WTC11 (cell line): ENCODE measurements at regions of chr12 and their contacts with region 1.

Region 1: DNA sequence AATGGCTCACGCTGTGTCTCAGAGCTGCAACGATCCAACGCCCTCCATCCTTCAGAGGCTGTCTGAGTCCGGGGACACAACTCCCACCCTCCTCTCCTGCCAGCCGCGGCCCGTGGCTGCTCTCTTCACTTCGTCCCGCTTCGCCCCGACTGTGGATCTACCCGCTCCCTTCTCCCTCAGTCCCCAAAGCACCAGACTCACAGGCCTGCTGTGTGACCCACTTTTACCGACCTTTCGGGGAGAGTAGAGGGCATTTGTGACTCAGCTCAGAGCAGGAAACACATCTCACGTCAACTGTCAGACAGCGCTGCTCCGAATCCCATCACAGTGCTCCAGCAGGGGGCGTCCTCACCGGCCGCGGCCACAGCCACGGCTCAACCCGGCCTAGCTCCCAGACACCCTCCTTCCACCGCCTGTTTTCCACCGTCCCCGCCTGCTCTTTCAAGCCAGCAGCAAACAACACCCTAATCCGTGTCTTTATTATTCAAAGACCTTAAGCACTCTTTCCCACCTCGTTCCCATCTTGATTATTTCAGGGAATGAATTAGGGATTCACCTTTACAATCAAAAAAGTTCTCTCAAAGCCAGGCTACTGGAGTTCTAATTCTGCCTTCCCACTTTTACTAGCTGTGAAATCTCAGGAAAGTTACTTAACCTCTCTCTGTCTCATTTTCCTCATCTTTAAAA is 5.0 kb upstream of the AQP2 start:
- DNase-seq: peak; percentile 90
- ATAC-seq: peak; percentile 95
- H3K4me3 Mint-ChIP-seq: peak overlapping the region; percentile 61
- H3K27ac Mint-ChIP-seq: 0 out of 2 replicates have a peak overlapping the region, but pooled peaks have one; percentile 18
- H3K4me1 Mint-ChIP-seq: peaks cover 40% of the 10 kb centered on the region
- H3K27me3 Mint-ChIP-seq: peaks cover 9% of the 10 kb centered on the region; the same call in 1 of the 2 replicates
- CTCF ChIP-seq: peak; percentile 69

Region 2: DNA sequence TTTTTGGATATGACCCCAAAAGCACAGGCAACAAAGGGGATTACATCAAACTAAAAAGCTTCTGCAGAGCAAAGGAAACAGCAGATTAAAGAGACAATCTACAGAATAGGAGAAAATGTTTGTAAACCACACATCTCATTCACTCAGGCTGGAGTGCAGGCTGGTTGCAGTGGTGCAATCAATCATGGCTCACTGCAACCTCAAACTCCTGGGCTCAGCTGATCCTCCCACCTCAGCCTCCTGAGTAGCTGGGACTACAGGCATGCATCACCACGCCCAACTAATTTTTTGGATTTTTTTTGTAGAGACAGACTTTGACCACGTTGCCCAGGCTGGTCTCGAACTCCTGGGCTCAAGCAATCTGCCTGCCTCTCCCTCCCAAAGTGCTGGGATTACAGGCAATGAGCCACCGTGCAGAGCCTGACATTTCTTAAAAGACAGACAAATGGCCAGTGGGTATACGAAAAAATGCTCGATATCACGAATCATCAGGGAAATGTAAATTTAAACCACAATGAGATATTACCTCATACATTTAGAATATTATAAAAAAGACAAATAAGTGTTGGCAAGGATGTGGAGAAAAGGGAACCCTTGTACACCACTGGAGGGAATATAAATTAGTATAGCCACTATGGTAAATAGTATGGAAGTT is 127.2 kb before region 1 on chr12:
- CTCF ChIA-PET with region 1: no interaction called
- POLR2A ChIA-PET with region 1: no interaction called
- DNase-seq: no peak
- ATAC-seq: no peak
- H3K4me3 Mint-ChIP-seq: no peak overlapping the region
- H3K27ac Mint-ChIP-seq: no peak overlapping the region
- H3K4me1 Mint-ChIP-seq: peaks cover 17% of the 10 kb centered on the region
- H3K27me3 Mint-ChIP-seq: no peaks in the 10 kb centered on the region
- CTCF ChIP-seq: no peak

Region 3: DNA sequence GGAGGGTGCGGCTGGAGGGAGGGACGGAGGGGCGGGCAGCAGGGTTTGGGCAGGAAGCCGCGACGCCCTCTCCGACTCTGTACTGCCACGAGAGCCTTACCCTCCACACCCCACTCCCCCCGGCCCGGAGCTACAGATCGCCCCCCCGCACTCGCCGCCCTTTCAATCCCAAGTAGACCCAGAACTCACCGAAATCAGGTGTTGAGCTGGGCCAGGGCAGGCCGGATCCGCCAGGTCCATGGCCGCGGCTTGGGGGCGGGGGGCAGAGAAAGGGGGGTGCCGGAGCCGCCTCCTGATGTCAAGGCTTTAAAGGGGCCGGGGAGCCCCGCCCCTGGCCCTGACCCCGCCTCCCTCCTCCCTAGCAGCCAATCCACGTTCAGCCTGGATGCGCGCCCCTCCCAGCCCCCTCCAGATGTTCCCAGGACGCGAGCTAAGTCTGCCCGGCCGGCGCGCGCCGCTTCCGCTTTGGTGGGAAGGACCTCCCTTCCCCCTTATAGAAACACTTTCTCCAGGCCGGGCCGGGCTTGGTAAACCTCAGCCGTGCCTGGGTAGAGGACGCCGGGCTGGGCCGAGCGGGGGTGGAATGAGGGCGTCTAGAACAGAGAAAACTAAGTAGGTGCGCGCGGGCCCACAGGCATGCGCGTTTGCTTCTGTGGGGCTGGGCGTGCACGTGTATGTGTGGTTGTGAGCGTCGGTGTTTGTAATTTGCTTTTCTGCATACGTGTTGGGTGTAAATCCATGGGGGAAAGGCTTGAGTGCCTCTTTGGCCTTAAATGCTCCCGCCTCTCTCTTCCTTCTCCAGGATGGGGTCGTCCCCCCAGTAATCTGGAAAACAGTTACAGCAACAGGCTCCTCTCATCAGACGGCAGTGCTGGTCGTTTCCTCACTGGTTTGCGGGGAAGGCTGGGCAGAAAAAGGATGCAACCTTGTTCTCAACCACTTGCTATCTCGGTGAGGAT is 117.1 kb before region 1 on chr12 and contains the start of gene NCKAP5L:
- CTCF ChIA-PET with region 1: interaction called, 11 read pairs
- POLR2A ChIA-PET with region 1: interaction called, 4 read pairs
- DNase-seq: peak; percentile 97
- ATAC-seq: peak; percentile 89
- H3K4me3 Mint-ChIP-seq: peak within 1 kb of the TSS; percentile 93
- H3K27ac Mint-ChIP-seq: peak within 1 kb of the TSS; percentile 100
- H3K4me1 Mint-ChIP-seq: peaks cover 33% of the 10 kb centered on the region
- H3K27me3 Mint-ChIP-seq: no peaks in the 10 kb centered on the region; the same call in 1 of the 2 replicates
- CTCF ChIP-seq: no peak
- total RNA-seq, gene NCKAP5L: 22.1 to 27.8 TPM (median 22.4 TPM) in 3 replicates

Region 4: DNA sequence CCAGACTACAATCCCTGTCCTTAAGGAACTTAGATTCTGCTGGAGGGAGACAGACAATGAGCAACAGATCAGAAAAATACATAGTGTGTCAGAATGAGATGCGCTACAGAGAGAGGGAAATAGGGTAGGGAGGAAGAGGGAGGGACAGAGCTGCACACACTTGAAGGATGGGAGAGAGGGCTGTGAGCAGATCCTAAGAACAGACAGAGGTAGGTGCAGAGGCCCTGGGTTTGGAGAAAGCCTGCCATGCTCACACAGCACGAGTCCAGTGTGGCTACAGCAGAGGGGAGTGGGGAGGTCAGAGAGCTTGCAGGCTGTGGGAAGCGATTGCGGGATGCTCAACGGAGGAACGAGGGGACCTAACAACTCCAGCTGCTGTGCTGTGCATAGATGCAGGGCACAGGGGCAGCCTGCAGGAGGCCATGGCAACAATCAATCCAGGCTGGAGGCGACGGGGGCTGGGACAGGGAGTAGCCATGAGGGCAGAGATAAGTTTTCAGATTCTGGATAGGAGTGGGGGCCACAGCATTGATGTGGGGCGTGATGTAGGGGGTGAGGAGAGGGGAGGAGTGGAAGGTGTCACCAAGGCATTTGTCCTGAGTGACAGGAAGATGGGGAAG is 62.6 kb before region 1 on chr12:
- CTCF ChIA-PET with region 1: interaction called, 29 read pairs
- POLR2A ChIA-PET with region 1: no interaction called
- DNase-seq: peak; percentile 46
- ATAC-seq: peak; percentile 70
- H3K4me3 Mint-ChIP-seq: no peak overlapping the region
- H3K27ac Mint-ChIP-seq: no peak overlapping the region
- H3K4me1 Mint-ChIP-seq: peaks cover 43% of the 10 kb centered on the region
- H3K27me3 Mint-ChIP-seq: no peaks in the 10 kb centered on the region
- CTCF ChIP-seq: no peak

Region 5: GRCh38 chr12:49903695-49904423 is 41.7 kb before region 1 on chr12 and contains the start of gene FAIM2:
- CTCF ChIA-PET with region 1: interaction called, 26 read pairs
- POLR2A ChIA-PET with region 1: no interaction called
- DNase-seq: peak; percentile 54
- ATAC-seq: peak; percentile 38
- H3K4me3 Mint-ChIP-seq: peak within 1 kb of the TSS; percentile 66
- H3K27ac Mint-ChIP-seq: no peak within 1 kb of the TSS
- H3K4me1 Mint-ChIP-seq: peaks cover 8% of the 10 kb centered on the region
- H3K27me3 Mint-ChIP-seq: peaks cover 37% of the 10 kb centered on the region
- CTCF ChIP-seq: no peak
- total RNA-seq, gene FAIM2: 0.18 to 0.30 TPM (median 0.22 TPM) in 3 replicates

Region 6: GRCh38 chr12:49930515-49931288 is 14.8 kb before region 1 on chr12:
- CTCF ChIA-PET with region 1: interaction called, 30 read pairs
- POLR2A ChIA-PET with region 1: interaction called, 4 read pairs
- DNase-seq: no peak
- ATAC-seq: no peak
- H3K4me3 Mint-ChIP-seq: no peak overlapping the region
- H3K27ac Mint-ChIP-seq: no peak overlapping the region
- H3K4me1 Mint-ChIP-seq: peaks cover 3% of the 10 kb centered on the region; the same call in 1 of the 2 replicates
- H3K27me3 Mint-ChIP-seq: no peaks in the 10 kb centered on the region; the same call in 1 of the 2 replicates
- CTCF ChIP-seq: no peak

Region 7: GRCh38 chr12:50038336-50038735 is 92.8 kb after region 1 on chr12:
- CTCF ChIA-PET with region 1: interaction called, 16 read pairs
- POLR2A ChIA-PET with region 1: no interaction called
- DNase-seq: no peak
- ATAC-seq: no peak
- H3K4me3 Mint-ChIP-seq: no peak overlapping the region
- H3K27ac Mint-ChIP-seq: no peak overlapping the region
- H3K4me1 Mint-ChIP-seq: peaks cover 4% of the 10 kb centered on the region
- H3K27me3 Mint-ChIP-seq: peaks cover 7% of the 10 kb centered on the region; the same call in 1 of the 2 replicates
- CTCF ChIP-seq: no peak

Region 8: GRCh38 chr12:50074936-50075807 is 129.6 kb after region 1 on chr12:
- CTCF ChIA-PET with region 1: interaction called, 24 read pairs
- POLR2A ChIA-PET with region 1: no interaction called
- DNase-seq: peak; percentile 93
- ATAC-seq: peak; percentile 93
- H3K4me3 Mint-ChIP-seq: no peak overlapping the region
- H3K27ac Mint-ChIP-seq: peak overlapping the region; percentile 72; the same call in 1 of the 2 replicates
- H3K4me1 Mint-ChIP-seq: peaks cover 18% of the 10 kb centered on the region
- H3K27me3 Mint-ChIP-seq: peaks cover 8% of the 10 kb centered on the region
- CTCF ChIP-seq: peak; percentile 84